Activated CD4-positive, alpha-beta T cell treated with anti-CD3 and anti-CD28 coated beads, Interleukin-2, amount 10 ng/mL, durations not matched to agents 7 days and 5 days (primary cell): ENCODE measurements at regions of chr12 and their contacts with region 1.

Region 1: DNA sequence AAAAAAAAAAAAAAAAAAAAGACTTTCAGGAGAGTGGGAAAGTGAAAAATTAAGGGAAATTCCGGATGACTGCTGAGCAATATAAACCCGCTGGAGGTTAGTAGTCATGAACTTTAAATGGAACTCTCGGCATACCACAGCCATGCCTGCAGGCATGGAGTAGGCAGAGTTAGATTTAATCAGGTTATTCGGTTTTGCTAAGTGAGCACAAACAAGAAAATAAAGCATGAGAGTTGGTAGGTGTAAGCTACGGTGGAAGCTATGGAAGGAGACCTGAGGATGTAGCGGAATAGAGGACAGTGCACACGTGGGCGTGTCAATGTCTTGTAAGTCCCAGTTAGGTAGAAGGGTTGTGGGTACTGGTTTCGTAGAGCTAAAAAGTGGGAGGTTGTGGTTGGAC is 11.8 kb upstream of the TUBA1C start:
- DNase-seq: no peak
- H3K4me3 Mint-ChIP-seq: no peak overlapping the region
- H3K27ac Mint-ChIP-seq: no peak overlapping the region
- H3K4me1 Mint-ChIP-seq: peaks cover 3% of the 10 kb centered on the region
- H3K27me3 Mint-ChIP-seq: no peaks in the 10 kb centered on the region

Region 2: DNA sequence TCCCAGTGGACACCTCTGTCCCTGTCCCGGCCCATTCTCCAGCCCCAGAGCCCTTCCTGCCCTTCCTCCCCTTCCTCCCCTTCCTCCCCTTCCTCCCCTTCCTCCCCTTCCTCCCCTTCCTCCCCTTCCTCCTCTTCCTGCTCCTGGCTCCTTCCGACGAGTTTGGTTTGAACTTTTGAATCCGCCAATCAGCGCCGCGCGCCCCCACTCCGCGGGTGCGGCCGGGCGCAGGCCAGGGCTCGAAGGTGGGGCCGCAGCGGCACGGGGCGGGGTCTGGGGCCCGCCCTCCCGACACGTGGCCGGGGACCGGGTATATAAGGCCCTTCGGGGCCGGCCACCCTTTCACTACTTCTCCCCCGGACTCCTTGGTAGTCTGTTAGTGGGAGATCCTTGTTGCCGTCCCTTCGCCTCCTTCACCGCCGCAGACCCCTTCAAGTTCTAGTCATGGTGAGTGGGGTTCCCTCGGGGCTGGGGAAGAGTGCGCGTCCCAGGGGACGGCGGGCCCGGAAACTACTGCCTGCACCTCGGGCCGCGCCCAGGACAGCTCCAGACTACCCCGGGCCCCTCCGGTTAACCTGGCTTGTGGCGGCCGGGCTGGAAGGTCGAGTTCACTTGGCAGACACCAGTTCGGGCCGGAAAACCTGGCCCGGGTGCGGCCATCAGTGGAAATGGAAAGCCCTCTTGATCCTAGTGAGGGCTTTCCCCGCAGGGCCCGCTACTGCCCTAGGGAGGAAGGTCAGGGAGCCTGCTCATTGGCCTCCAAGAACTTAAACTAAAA is 11.8 kb after region 1 on chr12 and contains the start of gene TUBA1C:
- CTCF ChIA-PET with region 1: interaction called, 6 read pairs
- POLR2A ChIA-PET with region 1: interaction called, 11 read pairs
- DNase-seq: peak; percentile 92
- H3K4me3 Mint-ChIP-seq: peak within 1 kb of the TSS; percentile 98
- H3K27ac Mint-ChIP-seq: peak within 1 kb of the TSS; percentile 99
- H3K4me1 Mint-ChIP-seq: peaks cover 52% of the 10 kb centered on the region
- H3K27me3 Mint-ChIP-seq: no peaks in the 10 kb centered on the region
- total RNA-seq, gene TUBA1C: 246 to 278 TPM

Region 3: GRCh38 chr12:49288412-49288853 is 35.3 kb after region 1 on chr12:
- CTCF ChIA-PET with region 1: no interaction called
- POLR2A ChIA-PET with region 1: no interaction called
- DNase-seq: peak; percentile 81
- H3K4me3 Mint-ChIP-seq: no peak overlapping the region
- H3K27ac Mint-ChIP-seq: no peak overlapping the region
- H3K4me1 Mint-ChIP-seq: peaks cover 3% of the 10 kb centered on the region
- H3K27me3 Mint-ChIP-seq: peaks cover 31% of the 10 kb centered on the region